OCI-LY7 (cell line): ENCODE measurements at regions of chr5 and their contacts with region 1.

Region 1: GRCh38 chr5:75236322-75237316 is at the start of gene ANKRD31:
- DNase-seq: peak; percentile 77
- H3K4me3 ChIP-seq: peak within 1 kb of the TSS; percentile 69
- H3K27ac ChIP-seq: no peak within 1 kb of the TSS
- H3K4me1 ChIP-seq: peaks cover 5% of the 10 kb centered on the region
- CTCF ChIP-seq: peak; percentile 73
- total RNA-seq, gene ANKRD31: not detected in 2 replicates

Region 2: DNA sequence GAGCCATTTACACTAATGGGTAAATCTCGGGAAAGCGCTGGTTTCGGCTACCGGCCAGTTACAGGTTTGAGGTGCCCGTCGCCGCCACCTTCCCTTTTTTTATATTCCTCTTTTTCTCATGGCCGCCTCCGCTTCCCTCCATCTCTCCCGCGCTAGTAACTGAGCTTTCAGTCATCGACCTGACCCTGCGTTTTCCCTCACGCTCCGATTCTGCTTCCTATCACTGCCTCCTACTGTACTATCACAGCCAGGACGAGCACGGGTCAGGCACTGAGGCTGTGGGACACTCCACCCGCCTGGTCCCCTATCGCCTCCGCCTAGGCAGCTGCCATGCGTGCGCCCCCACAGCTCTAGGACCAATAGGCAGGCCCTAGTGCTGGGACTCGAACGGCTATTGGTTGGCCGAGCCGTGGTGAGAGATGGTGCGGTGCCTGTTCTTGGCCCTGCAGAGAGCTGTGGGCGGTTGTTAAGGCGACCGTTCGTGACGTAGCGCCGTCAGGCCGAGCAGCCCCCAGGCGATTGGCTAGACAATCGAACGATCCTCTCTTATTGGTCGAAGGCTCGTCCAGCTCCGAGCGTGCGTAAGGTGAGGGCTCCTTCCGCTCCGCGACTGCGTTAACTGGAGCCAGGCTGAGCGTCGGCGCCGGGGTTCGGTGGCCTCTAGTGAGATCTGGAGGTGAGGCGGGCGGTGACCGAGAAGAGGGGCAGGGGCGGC is 100.2 kb after region 1 on chr5 and contains the start of gene HMGCR:
- CTCF ChIA-PET with region 1: interaction called, 3 read pairs
- POLR2A ChIA-PET with region 1: interaction called, 12 read pairs
- intact Hi-C with region 1: loop called (anchors 5 kb)
- DNase-seq: peak; percentile 99
- H3K4me3 ChIP-seq: peak within 1 kb of the TSS; percentile 99
- H3K27ac ChIP-seq: peak within 1 kb of the TSS; percentile 74
- H3K4me1 ChIP-seq: peaks cover 31% of the 10 kb centered on the region
- CTCF ChIP-seq: peak; percentile 46; the same call in 1 of the 2 replicates
- total RNA-seq, gene HMGCR: 42.6 and 58.6 TPM in 2 replicates

Region 3: GRCh38 chr5:75668977-75669689 is 432.5 kb after region 1 on chr5:
- CTCF ChIA-PET with region 1: no interaction called
- POLR2A ChIA-PET with region 1: interaction called, 3 read pairs
- intact Hi-C with region 1: loop called (anchors 5 kb)
- DNase-seq: peak; percentile 8
- H3K4me3 ChIP-seq: no peak overlapping the region
- H3K27ac ChIP-seq: no peak overlapping the region
- H3K4me1 ChIP-seq: peaks cover 4% of the 10 kb centered on the region
- CTCF ChIP-seq: no peak

Region 4: DNA sequence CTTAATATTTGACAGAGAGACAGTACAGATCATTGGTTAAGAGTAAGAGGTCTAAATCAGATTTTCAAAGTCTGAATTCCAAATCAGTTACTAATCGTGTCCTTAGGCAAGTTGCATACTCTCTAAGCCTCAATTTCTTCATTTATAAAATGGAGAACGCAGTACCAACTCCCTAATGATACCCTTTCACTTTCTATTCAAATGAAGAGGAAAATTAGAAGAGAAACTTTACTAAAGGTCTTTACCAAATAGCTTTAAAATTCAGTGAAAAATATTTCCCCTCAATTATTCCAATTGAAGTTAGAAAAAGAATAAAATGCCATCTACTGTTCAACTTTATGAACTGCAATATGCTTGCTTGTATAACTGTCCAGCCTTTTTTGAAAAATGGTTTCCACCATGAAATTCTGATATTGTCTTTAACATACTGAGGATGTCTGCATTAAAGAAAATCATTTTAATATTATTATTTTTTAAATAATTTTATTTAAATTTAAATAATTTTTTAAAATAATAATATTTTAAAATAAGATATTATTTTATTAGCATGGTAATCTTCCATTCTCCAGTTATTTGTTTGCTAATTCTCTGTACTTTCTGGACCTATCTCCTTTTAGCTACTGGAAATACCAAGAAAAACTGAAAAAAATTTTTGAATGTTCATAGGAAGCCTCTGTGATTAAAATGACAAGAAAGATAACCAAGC is 444.7 kb after region 1 on chr5:
- CTCF ChIA-PET with region 1: interaction called, 3 read pairs
- POLR2A ChIA-PET with region 1: interaction called, 4 read pairs
- intact Hi-C with region 1: loop called (anchors 2 kb)
- DNase-seq: peak; percentile 61
- H3K4me3 ChIP-seq: no peak overlapping the region
- H3K27ac ChIP-seq: no peak overlapping the region
- H3K4me1 ChIP-seq: no peaks in the 10 kb centered on the region
- CTCF ChIP-seq: peak; percentile 80

Region 5: DNA sequence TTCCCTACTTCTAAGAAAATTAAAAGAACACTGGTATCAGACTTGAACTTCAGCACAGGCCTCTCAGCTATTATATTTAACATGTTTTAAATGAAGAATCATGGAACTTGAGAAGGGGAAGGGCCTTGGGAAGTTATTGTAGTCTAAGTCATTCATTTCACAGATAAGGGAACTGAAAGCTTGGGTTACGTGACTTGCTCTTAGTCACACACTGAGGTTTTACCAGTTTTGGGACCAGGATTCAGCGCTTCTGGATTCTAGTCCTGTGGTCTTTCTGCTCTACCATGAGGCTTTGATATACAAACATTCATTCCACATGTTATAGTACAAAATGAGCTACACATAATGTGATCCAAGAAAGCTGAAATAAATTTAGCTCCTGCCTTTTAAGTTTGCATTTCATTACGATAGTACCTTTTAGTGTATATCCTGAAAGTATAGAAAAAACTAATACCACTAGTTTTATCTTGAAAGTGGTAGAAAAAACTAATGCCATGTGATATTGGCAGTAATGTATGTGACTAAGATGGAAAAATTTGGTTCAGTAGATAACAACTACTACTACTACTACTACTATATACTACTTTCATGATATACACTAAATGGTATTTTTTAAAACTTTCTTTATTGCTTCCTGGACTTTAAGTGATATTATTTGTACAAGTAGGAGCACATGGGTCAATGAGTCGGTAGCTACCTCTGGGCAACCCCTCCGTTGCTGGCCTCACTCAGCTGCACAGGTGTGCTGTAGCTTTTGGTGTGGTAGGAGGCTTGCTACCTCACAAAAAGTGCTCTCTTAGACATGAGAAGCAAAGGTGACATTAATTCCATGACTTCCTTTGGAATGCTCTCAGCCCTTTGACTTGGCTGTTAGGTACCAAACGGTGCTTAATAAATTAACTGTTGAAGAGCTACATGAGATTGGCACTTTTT is 1345.9 kb after region 1 on chr5:
- CTCF ChIA-PET with region 1: no interaction called
- POLR2A ChIA-PET with region 1: no interaction called
- intact Hi-C with region 1: loop called (anchors 5 kb)
- DNase-seq: peak; percentile 52
- H3K4me3 ChIP-seq: no peak overlapping the region
- H3K27ac ChIP-seq: peak overlapping the region; percentile 6
- H3K4me1 ChIP-seq: peaks cover 16% of the 10 kb centered on the region
- CTCF ChIP-seq: no peak